ENCODE measurements at regions of chr16 and their contacts with region 1.

Region 1: GRCh38 chr16:10122546-10122945 is 59.7 kb downstream of the GRIN2A start:
- DNase-seq: no peak
- H3K4me3 ChIP-seq: no peak overlapping the region
- CTCF ChIP-seq: peak; percentile 53

Region 2: DNA sequence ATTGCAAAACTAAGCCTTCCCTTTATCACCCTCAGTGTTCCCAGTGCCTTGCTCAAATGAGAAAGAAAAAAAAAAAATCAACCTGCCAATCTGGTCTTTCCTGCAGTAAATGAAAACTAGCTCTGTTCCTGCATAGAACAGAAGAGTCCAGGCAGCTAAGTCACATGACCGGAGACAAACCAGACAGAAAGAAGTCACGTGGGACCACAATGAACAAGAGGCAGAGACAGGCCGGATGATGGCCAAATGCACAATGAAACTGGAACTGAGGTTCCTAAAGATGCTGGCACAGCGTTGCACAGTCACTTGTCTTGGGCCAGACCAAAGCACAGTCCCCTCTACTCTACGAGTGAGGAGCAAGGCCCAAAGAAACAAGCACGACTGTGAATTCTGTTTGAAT is 112.9 kb before region 1 on chr16:
- in situ Hi-C with region 1: no loop called
- DNase-seq: no peak
- H3K4me3 ChIP-seq: no peak overlapping the region
- CTCF ChIP-seq: no peak

Region 3: GRCh38 chr16:10168258-10168657 is 45.7 kb after region 1 on chr16:
- in situ Hi-C with region 1: loop called (anchors 5 kb)
- DNase-seq: peak; percentile 83
- H3K4me3 ChIP-seq: no peak overlapping the region
- CTCF ChIP-seq: no peak

Measured in astrocyte of the cerebellum (primary cell).